ENCODE measurements at regions of chr9 and their contacts with region 1.

Region 1: DNA sequence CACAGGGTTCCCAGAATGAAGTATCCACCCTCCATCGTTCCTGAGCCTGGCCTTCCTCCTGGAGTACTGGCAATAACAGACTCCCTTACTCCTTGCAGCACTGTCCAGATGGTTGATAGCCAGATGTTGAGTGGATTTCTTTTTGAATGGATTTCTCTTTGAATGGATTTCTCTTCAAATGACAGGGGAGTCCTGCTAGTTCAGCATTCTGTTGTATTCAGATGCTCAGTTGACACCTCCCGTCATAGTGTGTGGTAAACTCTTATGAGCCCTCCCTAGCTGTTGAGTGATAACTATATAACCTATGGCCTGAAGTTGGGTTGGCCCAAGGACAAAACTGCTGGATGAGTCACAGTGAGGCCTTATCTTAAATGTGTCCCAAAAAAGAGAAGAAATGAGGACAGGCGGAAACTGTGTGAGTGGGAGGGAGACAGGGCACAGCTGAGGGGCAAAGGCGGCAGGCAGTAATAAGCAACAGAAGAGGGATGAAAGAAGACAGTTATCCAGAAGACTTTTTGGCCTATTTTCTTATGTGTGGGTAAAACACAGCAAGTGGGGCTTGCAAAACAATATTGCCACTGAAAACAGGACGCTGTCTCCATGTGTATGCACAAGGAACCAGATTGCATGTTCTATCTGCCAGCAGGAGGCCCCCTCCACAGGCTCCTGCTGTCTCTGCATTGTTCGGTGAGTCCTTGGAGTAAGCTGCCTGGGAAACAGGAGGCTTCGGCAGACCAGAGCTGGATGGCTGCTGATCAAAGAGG is 209.5 kb upstream of the S1PR3 start:
- DNase-seq: peak; percentile 73

Region 2: GRCh38 chr9:88605512-88606362 is 176.1 kb before region 1 on chr9:
- intact Hi-C with region 1: loop called in 1 of 2 experiments (anchors 10 kb)
- DNase-seq: no peak

Region 3: DNA sequence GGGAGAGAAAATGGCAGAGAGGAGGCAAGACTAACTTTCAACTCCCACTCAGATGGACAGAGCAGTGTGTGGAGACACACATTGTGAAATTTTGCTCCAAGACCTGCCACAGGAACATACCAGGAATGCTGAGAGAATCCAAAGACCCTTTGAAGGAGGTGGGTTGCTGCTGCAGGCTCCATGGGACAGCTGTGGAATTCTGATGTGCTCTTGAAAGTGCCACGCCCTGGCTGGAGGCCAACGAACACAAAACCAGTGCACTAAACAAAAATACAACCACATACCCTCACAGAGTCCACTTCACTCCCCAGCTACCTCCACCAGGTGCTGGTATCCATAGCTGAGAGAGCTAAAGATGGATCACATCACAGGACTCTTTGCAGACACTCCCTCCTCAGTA is 74.5 kb after region 1 on chr9:
- intact Hi-C with region 1: loop called in 1 of 2 experiments (anchors 5 kb)
- DNase-seq: no peak

Measured in posterior vena cava (tissue), 2 donors.